ENCODE measurements at regions of chr6 and their contacts with region 1.

Region 1: GRCh38 chr6:37169496-37170272 is at the start of gene PIM1:
- DNase-seq: peak; percentile 98
- ATAC-seq: peak; percentile 84
- H3K4me3 ChIP-seq: peak within 1 kb of the TSS; percentile 23 to 87 (median 82)
- H3K4me3 Mint-ChIP-seq: peak within 1 kb of the TSS; percentile 92
- H3K27ac ChIP-seq: peak within 1 kb of the TSS; percentile 68 to 85
- H3K27ac Mint-ChIP-seq: peak within 1 kb of the TSS; percentile 93
- H3K4me1 ChIP-seq: peaks cover 38 to 46% of the 10 kb centered on the region in 2 donors
- H3K4me1 Mint-ChIP-seq: peaks cover 45% of the 10 kb centered on the region
- H3K27me3 ChIP-seq: no peaks in the 10 kb centered on the region
- H3K27me3 Mint-ChIP-seq: no peaks in the 10 kb centered on the region
- CTCF ChIP-seq: no peak
- total RNA-seq, gene PIM1: 99.7 and 102 TPM in 2 replicates

Region 2: GRCh38 chr6:36885461-36886401 is 284.0 kb before region 1 on chr6 and contains the start of gene C6orf89:
- CTCF ChIA-PET with region 1: interaction called, 11 read pairs
- POLR2A ChIA-PET with region 1: interaction called, 3 read pairs
- intact Hi-C with region 1: no loop called
- DNase-seq: peak; percentile 98
- ATAC-seq: peak; percentile 99
- H3K4me3 ChIP-seq: peak within 1 kb of the TSS; percentile 68 to 89 (median 80)
- H3K4me3 Mint-ChIP-seq: peak within 1 kb of the TSS; percentile 90
- H3K27ac ChIP-seq: peak within 1 kb of the TSS; percentile 82 to 92
- H3K27ac Mint-ChIP-seq: peak within 1 kb of the TSS; percentile 92
- H3K4me1 ChIP-seq: peaks cover 17 to 22% of the 10 kb centered on the region in 2 donors
- H3K4me1 Mint-ChIP-seq: peaks cover 32% of the 10 kb centered on the region
- H3K27me3 ChIP-seq: no peaks in the 10 kb centered on the region
- H3K27me3 Mint-ChIP-seq: no peaks in the 10 kb centered on the region
- CTCF ChIP-seq: peak; percentile 86
- total RNA-seq, gene C6orf89: 34.2 and 35.3 TPM in 2 replicates

Region 3: DNA sequence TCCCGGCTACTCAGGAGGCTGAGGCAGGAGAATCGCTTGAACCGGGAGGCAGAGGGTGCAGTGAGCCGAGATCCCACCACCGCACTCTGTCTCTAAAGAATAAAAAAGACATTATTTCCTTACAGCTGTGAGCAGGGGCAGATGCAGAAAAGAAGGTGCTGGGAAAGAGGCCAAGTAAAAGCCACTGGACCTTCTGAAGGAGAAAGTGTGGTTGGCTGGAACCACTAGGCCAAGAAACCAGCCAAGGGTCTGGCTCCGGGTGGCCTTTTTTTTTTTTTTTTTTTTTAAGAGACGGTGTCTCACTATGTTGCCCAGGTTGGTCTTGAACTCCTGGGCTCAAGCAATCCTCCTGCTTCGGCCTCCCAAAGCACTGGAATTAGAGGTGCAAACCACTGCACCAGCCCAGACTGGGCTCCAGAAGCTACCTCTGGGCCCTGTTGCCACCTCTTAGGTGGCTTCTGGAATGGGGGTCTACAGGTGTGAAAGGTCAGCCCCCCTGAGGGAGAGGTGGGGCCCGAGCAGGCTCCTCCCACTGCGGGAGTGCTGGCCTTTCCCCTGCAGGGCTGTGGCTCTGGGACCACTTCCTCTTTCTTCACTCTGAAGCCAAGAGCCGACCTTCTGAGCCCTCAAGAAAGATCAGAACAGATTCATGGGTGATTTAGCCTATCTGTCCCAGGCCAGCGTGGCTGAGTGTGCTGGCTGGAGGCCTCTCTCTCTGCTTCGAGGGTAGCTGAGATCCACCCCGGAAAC is 164.4 kb before region 1 on chr6 and contains the start of gene FGD2:
- CTCF ChIA-PET with region 1: interaction called, 24 read pairs
- POLR2A ChIA-PET with region 1: interaction called, 9 read pairs
- intact Hi-C with region 1: no loop called
- DNase-seq: peak; percentile 89
- ATAC-seq: peak; percentile 72
- H3K4me3 ChIP-seq: peak within 1 kb of the TSS; percentile 82 to 97 (median 89)
- H3K4me3 Mint-ChIP-seq: peak within 1 kb of the TSS; percentile 96
- H3K27ac ChIP-seq: peak within 1 kb of the TSS; percentile 80 to 92
- H3K27ac Mint-ChIP-seq: peak within 1 kb of the TSS; percentile 95
- H3K4me1 ChIP-seq: peaks cover 56 to 79% of the 10 kb centered on the region in 2 donors
- H3K4me1 Mint-ChIP-seq: peaks cover 82% of the 10 kb centered on the region
- H3K27me3 ChIP-seq: no peaks in the 10 kb centered on the region
- H3K27me3 Mint-ChIP-seq: no peaks in the 10 kb centered on the region
- CTCF ChIP-seq: no peak
- total RNA-seq, gene FGD2: 352 and 360 TPM in 2 replicates

Region 4: GRCh38 chr6:37039958-37040357 is 129.7 kb before region 1 on chr6:
- CTCF ChIA-PET with region 1: interaction called, 510 read pairs
- POLR2A ChIA-PET with region 1: no interaction called
- intact Hi-C with region 1: no loop called
- DNase-seq: no peak
- ATAC-seq: no peak
- H3K4me3 ChIP-seq: no peak overlapping the region
- H3K4me3 Mint-ChIP-seq: no peak overlapping the region
- H3K27ac ChIP-seq: no peak overlapping the region
- H3K27ac Mint-ChIP-seq: no peak overlapping the region
- H3K4me1 ChIP-seq: no peaks in the 10 kb centered on the region
- H3K4me1 Mint-ChIP-seq: peaks cover 13% of the 10 kb centered on the region
- H3K27me3 ChIP-seq: no peaks in the 10 kb centered on the region
- H3K27me3 Mint-ChIP-seq: no peaks in the 10 kb centered on the region
- CTCF ChIP-seq: no peak

Region 5: DNA sequence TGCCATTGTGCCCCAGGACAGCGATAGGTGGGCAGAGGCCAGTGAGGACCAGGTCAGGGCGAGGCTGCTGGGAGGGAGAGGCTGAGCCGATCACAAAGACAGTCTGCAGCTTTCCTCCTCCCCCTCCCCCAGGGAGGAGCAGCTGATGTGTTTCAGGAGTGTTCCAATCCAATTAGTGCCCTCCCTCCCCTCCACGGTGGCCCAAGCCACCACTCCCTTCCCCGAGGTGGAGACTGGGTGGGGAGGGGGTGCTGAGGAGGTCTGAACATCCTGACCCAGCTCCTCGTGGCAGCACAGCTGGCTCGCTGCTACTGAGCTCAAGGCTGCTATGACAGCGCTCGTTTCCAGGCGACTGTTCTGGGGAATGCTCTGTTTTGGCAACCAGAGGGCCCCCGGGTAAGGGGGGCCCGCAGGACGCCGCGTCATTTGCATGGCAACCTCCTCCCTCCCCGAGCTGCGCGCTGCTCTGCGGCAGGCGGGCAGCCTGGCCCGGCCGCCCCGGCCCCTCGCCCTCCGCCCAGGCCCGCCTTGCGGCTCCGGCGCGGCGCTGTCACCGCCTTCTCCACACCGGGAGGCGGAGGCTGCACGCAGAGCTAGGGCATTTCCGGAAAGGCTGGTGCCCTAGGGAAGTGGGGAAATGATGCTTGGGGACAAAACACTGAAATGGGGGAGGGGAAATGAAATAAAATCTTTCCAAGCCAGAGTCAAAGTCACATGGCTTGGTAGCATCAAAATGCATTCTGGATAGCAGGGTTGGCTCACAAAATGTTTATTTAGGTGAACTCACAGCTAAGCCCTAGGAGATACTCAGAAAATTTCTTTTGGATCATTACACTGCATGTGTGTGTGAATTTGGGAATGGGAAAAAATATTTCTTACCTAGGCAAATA is 67.2 kb before region 1 on chr6:
- CTCF ChIA-PET with region 1: interaction called, 21 read pairs
- POLR2A ChIA-PET with region 1: interaction called, 21 read pairs
- intact Hi-C with region 1: loop called (anchors 1 kb)
- DNase-seq: peak; percentile 90
- ATAC-seq: peak; percentile 77
- H3K4me3 ChIP-seq: peak overlapping the region; percentile 2 to 64 (median 50)
- H3K4me3 Mint-ChIP-seq: peak overlapping the region; percentile 89
- H3K27ac ChIP-seq: peak overlapping the region; percentile 1 to 72
- H3K27ac Mint-ChIP-seq: peak overlapping the region; percentile 87
- H3K4me1 ChIP-seq: peaks cover 28 to 37% of the 10 kb centered on the region in 2 donors
- H3K4me1 Mint-ChIP-seq: peaks cover 36% of the 10 kb centered on the region
- H3K27me3 ChIP-seq: no peaks in the 10 kb centered on the region
- H3K27me3 Mint-ChIP-seq: no peaks in the 10 kb centered on the region
- CTCF ChIP-seq: no peak

Region 6: GRCh38 chr6:37182736-37183590 is 13.3 kb after region 1 on chr6:
- CTCF ChIA-PET with region 1: interaction called, 28 read pairs
- POLR2A ChIA-PET with region 1: interaction called, 3 read pairs
- intact Hi-C with region 1: no loop called
- DNase-seq: peak; percentile 68
- ATAC-seq: peak; percentile 98
- H3K4me3 ChIP-seq: no peak overlapping the region
- H3K4me3 Mint-ChIP-seq: no peak overlapping the region
- H3K27ac ChIP-seq: peak overlapping the region in 1 of 2 donors; percentile 12
- H3K27ac Mint-ChIP-seq: peak overlapping the region; percentile 68
- H3K4me1 ChIP-seq: peaks cover 15 to 26% of the 10 kb centered on the region in 2 donors
- H3K4me1 Mint-ChIP-seq: peaks cover 25% of the 10 kb centered on the region
- H3K27me3 ChIP-seq: no peaks in the 10 kb centered on the region
- H3K27me3 Mint-ChIP-seq: no peaks in the 10 kb centered on the region
- CTCF ChIP-seq: no peak